Psoas muscle (tissue), 8 donors: ENCODE measurements at regions of chr14 and their contacts with region 1.

Region 1: DNA sequence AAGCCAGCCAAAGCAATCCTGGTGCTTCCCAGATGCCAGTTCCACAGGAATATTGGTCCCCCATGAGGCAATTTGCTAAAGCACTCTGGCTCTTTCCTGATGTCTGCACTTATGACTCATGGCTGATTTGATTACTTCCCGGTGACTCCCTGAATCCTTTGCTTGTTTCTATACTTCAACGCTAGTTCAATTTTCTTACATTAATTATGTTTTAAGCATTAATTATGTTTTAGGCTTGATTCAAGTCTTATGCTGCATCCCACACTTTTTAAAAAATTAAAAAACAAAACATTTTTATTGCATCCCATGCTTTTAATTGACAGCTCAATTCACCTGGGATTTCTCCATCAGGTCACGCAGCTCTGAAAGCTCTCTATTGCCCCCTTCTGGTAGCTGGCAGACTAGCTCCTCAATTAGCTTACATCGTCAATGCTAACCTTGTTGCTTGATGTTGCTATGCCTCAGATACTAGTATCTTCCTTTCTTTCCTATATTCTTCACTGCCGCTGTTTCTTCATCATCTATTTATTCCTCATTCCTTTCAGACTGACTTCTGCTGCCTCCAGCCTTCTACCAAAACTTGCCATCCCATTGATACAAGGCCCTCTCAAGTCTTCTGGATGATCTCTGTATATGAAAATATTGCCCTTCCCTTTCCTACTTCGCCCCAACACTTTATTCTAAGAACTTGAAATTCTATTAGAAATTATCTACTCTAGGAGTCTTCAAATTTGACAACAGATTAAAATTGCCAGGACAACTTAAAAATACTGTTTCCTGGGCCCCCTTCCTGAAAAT is 32.0 kb downstream of the TSHR start:
- DNase-seq: peak; percentile 17 to 57
- ATAC-seq: peak; percentile 81 to 95 (median 85)
- H3K4me3 ChIP-seq: no peak overlapping the region
- H3K27ac ChIP-seq: no peak overlapping the region
- H3K4me1 ChIP-seq: no peaks in the 10 kb centered on the region
- H3K27me3 ChIP-seq: no peaks in the 10 kb centered on the region
- CTCF ChIP-seq: peak; percentile 96

Region 2: DNA sequence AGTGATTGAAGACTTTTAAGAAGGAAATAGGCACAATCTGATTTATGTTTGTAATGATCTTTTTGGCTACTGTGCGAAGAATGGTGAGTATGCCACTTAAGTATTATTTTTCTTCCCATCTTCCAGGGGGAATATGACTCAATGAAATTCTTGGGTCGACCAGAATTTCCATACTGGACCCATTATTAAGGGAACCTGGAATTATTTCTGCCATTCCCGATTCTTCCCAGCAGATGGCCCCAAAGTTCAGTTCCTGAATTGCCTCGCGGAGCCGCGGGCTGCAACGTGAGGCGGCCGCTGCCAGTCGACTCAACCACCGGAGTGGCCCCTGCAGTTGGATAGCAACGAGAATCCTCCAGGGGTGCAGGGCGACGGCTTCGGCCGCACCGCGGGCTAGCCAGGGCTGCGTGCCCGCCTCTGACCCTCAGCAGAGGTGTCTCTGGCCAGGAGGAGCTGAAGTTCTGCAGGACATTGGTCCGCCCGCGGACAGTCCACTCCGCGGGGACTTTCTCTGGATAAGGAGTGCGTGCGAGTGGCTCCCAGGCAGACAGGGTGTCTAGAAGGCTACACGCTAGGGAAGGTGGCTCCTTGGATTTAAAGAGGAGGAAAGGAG is 32.6 kb before region 1 on chr14:
- intact Hi-C with region 1: loop called (anchors 1 to 2 kb)
- DNase-seq: peak; percentile 80 to 86
- ATAC-seq: peak; percentile 93 to 98 (median 96)
- H3K4me3 ChIP-seq: peak overlapping the region; percentile 73
- H3K27ac ChIP-seq: no peak overlapping the region
- H3K4me1 ChIP-seq: peaks cover 5% of the 10 kb centered on the region
- H3K27me3 ChIP-seq: no peaks in the 10 kb centered on the region
- CTCF ChIP-seq: peak; percentile 84